ENCODE measurements at regions of chr13 and their contacts with region 1.

Region 1: DNA sequence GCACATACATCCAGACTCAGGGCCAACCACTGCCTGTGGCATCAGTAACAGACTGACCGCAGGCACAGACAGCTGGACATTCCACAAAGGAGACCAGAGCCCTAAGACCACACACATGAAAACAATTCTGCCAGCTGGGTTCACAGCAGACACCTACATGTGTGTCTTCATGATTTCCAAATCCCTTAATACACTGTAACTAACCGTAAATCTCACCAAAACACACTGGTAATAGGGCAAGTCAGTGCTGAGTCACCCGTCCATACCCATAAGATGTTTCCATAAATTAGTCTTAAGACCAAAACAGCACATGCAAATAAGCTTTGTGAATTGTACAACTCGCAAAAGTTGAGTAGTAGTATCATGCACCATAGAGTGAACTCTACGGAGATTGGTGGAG is 65.4 kb downstream of the TUBGCP3 start:
- DNase-seq: no peak
- ATAC-seq: no peak
- H3K4me3 ChIP-seq: no peak overlapping the region
- H3K27ac ChIP-seq: no peak overlapping the region
- H3K4me1 ChIP-seq: no peaks in the 10 kb centered on the region
- H3K27me3 ChIP-seq: no peaks in the 10 kb centered on the region
- CTCF ChIP-seq: no peak

Region 2: GRCh38 chr13:111559612-111560403 is 962.8 kb before region 1 on chr13:
- intact Hi-C with region 1: loop called in 1 of 10 experiments (anchors 5 kb)
- DNase-seq: no peak
- ATAC-seq: no peak
- H3K4me3 ChIP-seq: no peak overlapping the region
- H3K27ac ChIP-seq: no peak overlapping the region
- H3K4me1 ChIP-seq: no peaks in the 10 kb centered on the region
- H3K27me3 ChIP-seq: peaks cover 0 to 82% (median 51%) of the 10 kb centered on the region in 7 donors
- CTCF ChIP-seq: no peak

Region 3: DNA sequence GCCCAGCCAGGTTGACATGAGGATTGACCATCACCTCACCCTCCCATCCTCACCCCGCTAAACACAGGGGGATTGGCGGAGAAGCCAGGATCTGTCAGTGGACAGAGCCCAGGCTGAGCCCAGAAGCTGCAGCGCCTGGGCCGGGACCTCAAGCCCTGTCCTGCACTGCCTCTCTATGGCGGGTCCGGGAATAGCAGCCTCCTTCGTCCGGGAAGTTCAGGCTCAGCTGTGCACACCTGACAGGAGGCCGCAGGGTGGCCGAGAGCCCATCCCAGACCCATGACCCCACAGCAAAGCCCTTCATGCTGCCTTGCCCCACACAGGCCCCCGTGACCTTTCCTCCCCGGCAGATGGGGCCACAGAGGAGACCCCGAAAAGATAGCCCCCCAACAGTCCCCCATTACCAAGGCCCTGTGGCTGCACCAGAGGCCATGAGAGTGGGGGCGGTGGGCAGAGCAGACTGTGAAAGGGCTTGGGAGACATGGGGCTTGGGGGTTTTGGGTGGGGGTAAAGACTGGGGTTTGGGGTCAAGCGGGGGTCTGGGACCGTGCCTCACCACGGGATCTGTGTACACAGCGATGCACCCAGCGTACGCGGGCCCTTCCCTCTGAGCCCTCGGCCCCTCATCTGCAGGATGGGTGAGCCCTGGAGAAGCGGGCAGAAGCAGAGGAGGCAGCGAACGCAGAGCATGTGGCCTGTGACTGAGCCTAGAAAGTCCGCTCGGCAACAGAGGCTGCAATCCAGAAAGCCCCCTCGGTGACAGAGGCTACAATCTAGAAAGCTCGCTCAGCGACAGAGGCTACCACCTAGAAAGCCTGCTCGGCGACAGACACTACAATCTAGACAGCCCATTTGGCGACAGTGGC is 78.3 kb before region 1 on chr13:
- intact Hi-C with region 1: no loop called
- DNase-seq: peak; percentile 46 to 62
- ATAC-seq: peak; percentile 67 to 84 (median 72)
- H3K4me3 ChIP-seq: no peak overlapping the region
- H3K27ac ChIP-seq: no peak overlapping the region
- H3K4me1 ChIP-seq: peaks cover 0 to 10% (median 0%) of the 10 kb centered on the region in 9 donors
- H3K27me3 ChIP-seq: peaks cover 17 to 82% (median 64%) of the 10 kb centered on the region in 7 donors
- CTCF ChIP-seq: peak; percentile 80 to 88 (median 85)

Measured in heart right ventricle (tissue), 16 donors.